Panc1 (cell line): ENCODE measurements at regions of chr15 and their contacts with region 1.

Region 1: GRCh38 chr15:56978900-56979662 is 60.6 kb downstream of the TCF12 start:
- DNase-seq: peak; percentile 85
- ATAC-seq: peak; percentile 91
- H3K4me3 ChIP-seq: no peak overlapping the region
- H3K27ac ChIP-seq: peak overlapping the region; percentile 82
- H3K4me1 ChIP-seq: peaks cover 47% of the 10 kb centered on the region
- H3K27me3 ChIP-seq: no peaks in the 10 kb centered on the region
- CTCF ChIP-seq: no peak

Region 2: DNA sequence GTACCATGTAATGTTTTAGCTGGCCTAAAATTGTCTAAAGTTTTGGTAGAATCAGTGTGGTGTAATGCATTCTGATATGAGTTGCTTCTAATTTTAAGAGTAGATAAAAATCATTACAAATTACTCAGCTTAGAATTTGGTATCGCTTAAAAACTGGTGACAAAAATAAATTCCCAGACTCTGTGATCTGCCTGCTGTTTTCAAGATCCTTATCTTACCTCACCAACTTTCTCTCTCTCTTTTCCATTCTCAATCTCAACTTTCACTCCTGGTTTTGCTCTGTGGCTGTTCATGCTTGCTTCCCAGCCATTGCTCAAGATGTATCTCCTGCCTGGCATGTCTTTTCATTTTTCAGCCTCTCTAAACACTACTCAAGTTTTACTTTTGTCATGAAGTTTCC is 14.9 kb before region 1 on chr15:
- CTCF ChIA-PET with region 1: interaction called, 12 read pairs
- POLR2A ChIA-PET with region 1: no interaction called
- in situ Hi-C with region 1: no loop called
- intact Hi-C with region 1: no loop called
- DNase-seq: no peak
- ATAC-seq: no peak
- H3K4me3 ChIP-seq: no peak overlapping the region
- H3K27ac ChIP-seq: no peak overlapping the region
- H3K4me1 ChIP-seq: peaks cover 20% of the 10 kb centered on the region; the same call in 1 of the 2 replicates
- H3K27me3 ChIP-seq: no peaks in the 10 kb centered on the region
- CTCF ChIP-seq: no peak

Region 3: GRCh38 chr15:57003418-57003817 is 24.3 kb after region 1 on chr15:
- CTCF ChIA-PET with region 1: no interaction called
- POLR2A ChIA-PET with region 1: no interaction called
- in situ Hi-C with region 1: no loop called
- intact Hi-C with region 1: no loop called
- DNase-seq: peak; percentile 42
- ATAC-seq: no peak
- H3K4me3 ChIP-seq: no peak overlapping the region
- H3K27ac ChIP-seq: no peak overlapping the region
- H3K4me1 ChIP-seq: no peaks in the 10 kb centered on the region; the same call in 1 of the 2 replicates
- H3K27me3 ChIP-seq: no peaks in the 10 kb centered on the region
- CTCF ChIP-seq: no peak